OCI-LY7 (cell line): ENCODE measurements at regions of chr14 and their contacts with region 1.

Region 1: GRCh38 chr14:64764641-64765520 is 60.7 kb downstream of the PLEKHG3 start:
- DNase-seq: peak; percentile 56
- H3K4me3 ChIP-seq: no peak overlapping the region
- H3K27ac ChIP-seq: no peak overlapping the region
- H3K4me1 ChIP-seq: no peaks in the 10 kb centered on the region
- CTCF ChIP-seq: peak; percentile 75

Region 2: GRCh38 chr14:64671591-64671990 is 93.3 kb before region 1 on chr14:
- CTCF ChIA-PET with region 1: interaction called, 3 read pairs
- POLR2A ChIA-PET with region 1: no interaction called
- intact Hi-C with region 1: loop called (anchors 1 kb)
- DNase-seq: peak; percentile 33
- H3K4me3 ChIP-seq: no peak overlapping the region
- H3K27ac ChIP-seq: no peak overlapping the region
- H3K4me1 ChIP-seq: no peaks in the 10 kb centered on the region
- CTCF ChIP-seq: peak; percentile 83